Activated naive CD8-positive, alpha-beta T cell treated with anti-CD3 and anti-CD28 coated beads, Interleukin-2, amount 10 ng/mL, durations not matched to agents 7 days and 5 days (primary cell): ENCODE measurements at regions of chr14 and their contacts with region 1.

Region 1: DNA sequence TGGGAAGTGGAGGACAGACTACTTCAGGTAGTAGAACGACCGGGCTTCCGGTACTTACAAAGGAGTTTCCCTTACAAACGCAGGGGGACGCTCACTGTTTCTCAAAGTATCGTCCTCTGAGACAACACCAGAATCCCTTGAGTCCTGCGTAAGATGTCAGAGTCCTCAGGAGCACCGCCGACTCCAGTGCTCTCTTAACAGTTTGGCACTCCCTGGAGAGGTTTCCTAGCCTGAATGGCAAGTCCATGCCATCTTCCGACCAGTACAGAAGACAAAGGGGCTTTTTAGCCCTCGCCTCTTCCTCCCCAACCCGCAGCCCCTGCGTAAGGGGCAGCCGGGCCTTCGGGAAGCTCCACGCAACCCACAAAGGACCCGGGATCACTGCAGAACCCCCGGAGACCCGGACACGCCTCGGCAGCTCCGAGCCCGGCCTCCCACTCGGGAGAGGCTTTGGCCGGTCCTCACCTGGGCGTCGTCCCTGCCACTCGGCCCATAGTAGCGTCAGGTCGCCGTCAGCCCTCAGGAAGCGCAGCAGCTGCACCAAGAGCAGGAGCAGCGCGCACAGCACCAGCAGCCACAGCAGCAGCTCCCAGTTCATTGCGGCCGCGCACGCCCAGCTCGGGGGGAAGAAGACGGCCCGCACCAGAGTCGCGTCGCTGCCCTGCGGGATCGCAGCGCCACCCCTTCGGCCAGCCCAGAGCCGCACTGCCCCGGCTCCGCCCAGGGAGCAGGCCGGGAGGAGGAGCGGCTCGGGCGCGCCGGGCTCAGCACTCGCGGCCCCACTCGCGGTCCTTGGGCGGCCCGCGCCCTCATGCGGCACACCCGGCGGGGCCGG is at the start of gene DHRS7:
- DNase-seq: peak; percentile 83
- ATAC-seq: peak; percentile 90
- H3K4me3 Mint-ChIP-seq: peak within 1 kb of the TSS; percentile 87
- H3K27ac Mint-ChIP-seq: peak within 1 kb of the TSS; percentile 91
- H3K4me1 Mint-ChIP-seq: peaks cover 25% of the 10 kb centered on the region
- H3K27me3 Mint-ChIP-seq: peaks cover 3% of the 10 kb centered on the region
- total RNA-seq, gene DHRS7: 69.3 to 73.0 TPM

Region 2: DNA sequence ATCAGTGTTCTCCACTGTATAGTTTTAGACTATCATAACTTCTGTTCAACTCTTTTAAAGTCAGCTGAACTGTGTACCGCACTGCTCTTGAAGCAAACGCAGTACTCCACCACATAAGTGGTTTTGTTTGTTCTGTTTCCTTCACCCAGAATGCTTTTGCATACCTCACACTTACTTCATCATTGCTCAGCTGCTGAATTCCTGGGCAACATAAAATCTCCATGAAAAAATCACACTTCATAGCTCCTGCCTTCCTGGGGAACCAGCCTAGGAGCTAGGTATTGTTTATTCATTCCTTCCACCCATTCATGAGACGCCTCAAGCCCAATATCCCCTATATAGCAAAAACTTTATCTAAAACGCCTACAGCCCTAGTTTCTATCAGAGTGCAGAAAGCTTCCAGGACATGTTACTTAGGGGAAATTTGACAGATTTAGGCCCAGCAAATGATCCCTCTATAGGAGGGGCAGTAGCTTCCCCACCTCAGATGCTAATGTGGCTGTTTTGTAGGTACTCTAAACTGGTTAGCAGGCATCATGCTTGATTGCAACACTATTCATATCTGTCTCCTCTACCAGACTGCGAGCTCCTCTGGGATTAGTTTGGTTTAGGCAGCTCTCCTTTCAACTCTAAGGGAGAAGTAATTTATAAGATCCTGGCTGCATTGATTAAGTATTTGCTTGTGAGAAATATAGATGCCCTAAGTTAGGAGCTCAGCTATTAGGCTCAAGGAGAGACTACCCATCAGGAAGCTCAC is 200.5 kb before region 1 on chr14:
- POLR2A ChIA-PET with region 1: interaction called, 15 read pairs
- DNase-seq: no peak
- ATAC-seq: peak; percentile 48
- H3K4me3 Mint-ChIP-seq: peak overlapping the region; percentile 84
- H3K27ac Mint-ChIP-seq: peak overlapping the region; percentile 89
- H3K4me1 Mint-ChIP-seq: peaks cover 16% of the 10 kb centered on the region
- H3K27me3 Mint-ChIP-seq: no peaks in the 10 kb centered on the region

Region 3: GRCh38 chr14:60091550-60092530 is 73.1 kb before region 1 on chr14 and contains the start of gene PCNX4:
- POLR2A ChIA-PET with region 1: interaction called, 13 read pairs
- DNase-seq: peak; percentile 89
- ATAC-seq: peak; percentile 95
- H3K4me3 Mint-ChIP-seq: peak within 1 kb of the TSS; percentile 94
- H3K27ac Mint-ChIP-seq: peak within 1 kb of the TSS; percentile 94
- H3K4me1 Mint-ChIP-seq: peaks cover 26% of the 10 kb centered on the region
- H3K27me3 Mint-ChIP-seq: no peaks in the 10 kb centered on the region
- total RNA-seq, gene PCNX4: 34.4 to 35.5 TPM

Region 4: GRCh38 chr14:60151715-60152114 is 13.2 kb before region 1 on chr14:
- POLR2A ChIA-PET with region 1: interaction called, 37 read pairs
- DNase-seq: peak; percentile 48
- ATAC-seq: peak; percentile 95
- H3K4me3 Mint-ChIP-seq: peak overlapping the region; percentile 36
- H3K27ac Mint-ChIP-seq: peak overlapping the region; percentile 78
- H3K4me1 Mint-ChIP-seq: peaks cover 39% of the 10 kb centered on the region
- H3K27me3 Mint-ChIP-seq: no peaks in the 10 kb centered on the region

Region 5: GRCh38 chr14:60195179-60195810 is 30.4 kb after region 1 on chr14:
- POLR2A ChIA-PET with region 1: no interaction called
- DNase-seq: no peak
- ATAC-seq: no peak
- H3K4me3 Mint-ChIP-seq: no peak overlapping the region
- H3K27ac Mint-ChIP-seq: no peak overlapping the region
- H3K4me1 Mint-ChIP-seq: peaks cover 6% of the 10 kb centered on the region
- H3K27me3 Mint-ChIP-seq: no peaks in the 10 kb centered on the region

Region 6: GRCh38 chr14:60248697-60249318 is 83.9 kb after region 1 on chr14 and contains the start of gene PPM1A:
- POLR2A ChIA-PET with region 1: interaction called, 14 read pairs
- DNase-seq: peak; percentile 93
- ATAC-seq: peak; percentile 76
- H3K4me3 Mint-ChIP-seq: peak within 1 kb of the TSS; percentile 90
- H3K27ac Mint-ChIP-seq: peak within 1 kb of the TSS; percentile 99
- H3K4me1 Mint-ChIP-seq: peaks cover 38% of the 10 kb centered on the region
- H3K27me3 Mint-ChIP-seq: no peaks in the 10 kb centered on the region
- total RNA-seq, gene PPM1A: 45.8 to 54.4 TPM